ENCODE measurements at regions of chr16 and their contacts with region 1.

Region 1: DNA sequence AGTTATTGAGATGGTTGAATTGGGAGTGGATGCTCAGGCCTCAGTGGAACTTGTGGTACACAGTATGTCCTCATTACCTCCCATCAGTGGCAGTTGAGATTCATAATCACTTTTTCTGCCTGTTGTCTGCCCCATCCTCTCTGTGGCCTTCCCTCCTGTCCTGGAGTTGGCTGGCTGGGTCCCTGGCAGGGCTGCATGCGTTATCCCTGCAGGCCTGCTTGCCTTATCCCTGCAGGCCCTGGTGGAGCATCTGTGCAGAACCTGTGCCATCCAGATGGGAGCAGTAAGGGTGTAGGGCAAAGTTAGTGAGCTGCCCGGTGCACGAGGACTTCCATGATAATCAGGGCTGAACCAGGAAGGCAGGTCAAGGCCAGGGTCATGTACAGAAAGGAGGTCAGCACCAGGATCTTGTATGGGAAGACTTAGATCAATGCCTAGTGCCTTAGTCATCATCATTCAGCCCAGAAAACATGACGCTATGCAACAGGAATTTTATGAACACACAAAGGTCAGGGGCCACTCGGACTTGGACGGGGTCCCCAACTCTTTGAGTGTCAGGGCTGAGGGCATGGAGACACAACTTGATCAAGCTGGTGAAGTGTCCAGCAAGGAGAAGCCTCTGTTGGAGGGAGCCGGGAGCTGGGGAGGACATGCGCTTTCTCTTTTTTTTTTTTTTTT is 47.2 kb downstream of the ABCC1 start:
- DNase-seq: no peak
- H3K4me3 ChIP-seq: no peak overlapping the region
- H3K27ac ChIP-seq: no peak overlapping the region
- H3K4me1 ChIP-seq: peaks cover 4% of the 10 kb centered on the region
- H3K27me3 ChIP-seq: no peaks in the 10 kb centered on the region
- CTCF ChIP-seq: no peak

Region 2: DNA sequence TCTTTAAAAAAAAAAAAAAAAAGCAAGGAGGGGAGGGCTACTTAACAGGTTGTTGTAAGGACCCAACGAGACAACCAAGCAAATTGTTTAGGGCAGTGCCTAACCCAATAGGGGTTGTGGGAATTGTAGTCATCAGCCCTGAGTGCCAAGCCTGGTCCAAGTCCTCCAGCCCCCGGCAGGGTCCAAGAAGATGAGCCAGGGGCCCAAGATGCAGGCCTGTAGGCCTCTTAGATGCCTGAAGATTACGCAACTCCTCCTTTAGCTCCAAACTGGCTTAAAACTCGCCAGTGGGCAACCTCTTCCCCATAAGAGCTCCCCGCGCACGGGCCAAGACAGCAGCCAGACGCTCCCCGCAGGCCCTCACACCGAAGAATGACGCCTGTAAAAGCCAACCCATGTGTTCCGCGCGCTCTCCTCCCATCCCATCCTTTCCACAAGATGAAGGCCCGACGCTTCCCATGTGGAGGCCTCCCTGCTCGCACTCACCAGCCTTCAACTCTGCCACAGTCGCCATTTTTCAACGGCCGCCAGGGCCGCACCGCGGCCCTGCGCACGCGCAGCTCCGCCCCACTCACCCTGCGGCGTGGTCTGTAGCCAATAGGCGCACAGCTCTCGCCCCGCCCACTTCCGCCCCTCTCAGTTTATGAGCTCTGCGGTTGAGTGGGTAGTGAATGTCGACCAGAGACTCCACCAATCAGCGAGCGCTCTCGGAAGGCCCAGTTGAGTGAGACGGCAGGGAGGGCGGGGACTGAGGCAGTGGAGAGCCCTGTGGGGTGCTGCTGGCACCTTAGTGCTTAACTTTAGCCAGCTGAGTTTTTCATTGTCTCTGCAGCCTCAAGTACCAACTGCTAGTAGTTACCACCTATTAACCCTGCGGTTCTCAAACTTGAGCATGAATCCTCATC is 108.2 kb before region 1 on chr16 and contains the start of gene CEP20:
- dilution Hi-C with region 1: loop called (anchors 25 kb)
- DNase-seq: peak; percentile 95
- H3K4me3 ChIP-seq: peak within 1 kb of the TSS; percentile 71 to 99 (median 95)
- H3K27ac ChIP-seq: peak within 1 kb of the TSS; percentile 98
- H3K4me1 ChIP-seq: peaks cover 17% of the 10 kb centered on the region
- H3K27me3 ChIP-seq: no peaks in the 10 kb centered on the region
- CTCF ChIP-seq: peak in 1 of 3 experiments; percentile 19
- polyA plus RNA-seq, gene CEP20: 23.9 to 44.1 TPM (median 27.1 TPM) in 3 replicates

Region 3: DNA sequence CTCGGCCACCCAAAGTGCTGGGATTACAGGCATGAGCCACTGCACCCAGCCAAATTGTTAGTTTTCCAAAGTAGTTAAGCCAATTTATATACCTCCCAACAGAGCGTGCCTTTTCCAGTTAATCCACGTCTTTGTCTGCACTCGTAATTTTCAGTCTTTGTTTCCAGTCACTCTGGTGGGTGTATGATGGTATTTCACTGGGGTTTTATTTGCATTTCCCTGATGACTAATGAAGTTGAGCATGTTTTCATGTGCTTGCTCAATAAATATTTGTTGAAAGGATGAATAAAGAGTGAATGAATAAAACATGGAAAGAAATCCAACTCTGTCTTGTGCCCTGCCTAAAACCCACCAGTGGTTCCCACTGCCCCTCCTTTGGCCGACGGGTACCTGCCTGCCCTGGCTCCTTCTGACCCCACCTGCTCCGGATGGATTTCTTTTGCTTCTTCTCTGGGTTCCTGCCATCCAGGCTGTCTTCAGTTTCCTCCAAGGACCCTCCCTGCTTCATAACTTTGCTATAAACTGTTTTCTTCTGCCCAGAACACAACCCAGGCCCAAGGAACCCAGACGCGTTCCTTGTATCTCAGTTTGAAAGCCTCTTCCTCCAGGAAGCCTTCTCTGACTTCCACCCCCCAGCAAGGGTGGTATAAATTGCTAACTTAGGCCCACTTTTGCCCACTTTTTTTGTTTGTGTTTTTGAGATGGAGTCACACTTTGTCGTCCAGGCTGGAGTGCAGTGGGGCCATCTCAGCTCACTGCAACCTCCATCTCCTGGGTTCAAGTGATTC is 50.1 kb before region 1 on chr16:
- dilution Hi-C with region 1: no loop called
- DNase-seq: no peak
- H3K4me3 ChIP-seq: peak overlapping the region in 1 of 3 experiments; percentile 0
- H3K27ac ChIP-seq: peak overlapping the region; percentile 73
- H3K4me1 ChIP-seq: peaks cover 19% of the 10 kb centered on the region
- H3K27me3 ChIP-seq: no peaks in the 10 kb centered on the region
- CTCF ChIP-seq: no peak

Measured in keratinocyte (primary cell).